Posterior vena cava (tissue), 2 donors: ENCODE measurements at regions of chr1 and their contacts with region 1.

Region 1: GRCh38 chr1:12539705-12540579 is 78.1 kb downstream of the DHRS3 start:
- DNase-seq: peak; percentile 97

Region 2: DNA sequence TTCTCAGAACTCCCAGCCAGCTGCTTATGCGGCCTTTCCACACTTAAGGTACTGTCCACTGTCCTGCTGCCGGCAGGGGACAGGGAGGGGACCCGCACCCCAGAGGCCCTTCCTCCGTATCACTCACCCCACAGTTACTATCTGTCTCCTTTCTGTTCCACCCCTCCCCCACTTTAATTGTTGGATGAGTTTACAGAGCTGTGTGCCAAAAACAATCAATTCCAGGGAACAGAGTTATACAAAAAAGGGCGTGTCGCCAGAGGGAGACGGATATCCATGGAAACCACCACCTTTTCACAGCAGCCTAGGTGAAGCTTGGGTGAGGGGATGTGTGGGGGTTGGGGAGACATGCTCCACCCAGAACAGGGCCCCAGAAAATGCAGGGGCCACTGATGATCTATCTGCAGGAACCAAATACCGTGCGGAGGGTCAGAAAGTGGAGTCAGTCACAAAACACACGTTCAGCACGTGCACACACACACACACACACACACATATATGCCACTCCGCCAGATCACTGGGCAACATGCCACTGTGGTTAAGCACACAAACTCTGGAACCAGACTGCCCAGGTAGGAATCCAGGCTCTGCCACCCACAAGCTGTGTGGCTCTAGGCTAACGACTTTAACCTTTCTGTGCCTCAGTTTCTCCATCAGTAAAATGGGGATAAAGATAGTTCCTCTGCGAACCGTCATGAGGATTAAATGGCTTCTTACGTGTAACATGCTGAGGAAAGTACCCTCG is 1774.0 kb before region 1 on chr1:
- intact Hi-C with region 1: no loop called
- DNase-seq: no peak

Region 3: DNA sequence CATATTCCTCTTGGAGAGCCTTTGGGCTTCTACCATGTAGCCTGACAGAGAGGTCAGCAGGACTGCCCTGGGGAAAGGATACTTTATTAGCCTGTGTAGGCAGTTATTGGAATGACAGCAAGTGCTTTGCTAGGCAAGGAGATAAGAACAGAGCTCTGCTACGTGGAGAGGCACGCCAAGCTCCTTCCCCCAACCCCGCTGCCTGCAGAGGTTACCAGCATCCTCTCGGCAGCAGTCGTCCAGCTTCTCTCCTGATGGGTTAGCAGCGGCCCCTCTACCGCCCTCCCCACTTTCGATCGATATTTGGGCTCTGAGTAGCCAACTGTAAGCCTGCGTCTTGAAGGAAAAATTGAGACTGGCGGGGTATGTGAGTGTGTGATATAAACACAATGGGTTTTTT is 44.2 kb before region 1 on chr1:
- intact Hi-C with region 1: loop called in 1 of 2 experiments (anchors 2 kb)
- DNase-seq: no peak

Region 4: DNA sequence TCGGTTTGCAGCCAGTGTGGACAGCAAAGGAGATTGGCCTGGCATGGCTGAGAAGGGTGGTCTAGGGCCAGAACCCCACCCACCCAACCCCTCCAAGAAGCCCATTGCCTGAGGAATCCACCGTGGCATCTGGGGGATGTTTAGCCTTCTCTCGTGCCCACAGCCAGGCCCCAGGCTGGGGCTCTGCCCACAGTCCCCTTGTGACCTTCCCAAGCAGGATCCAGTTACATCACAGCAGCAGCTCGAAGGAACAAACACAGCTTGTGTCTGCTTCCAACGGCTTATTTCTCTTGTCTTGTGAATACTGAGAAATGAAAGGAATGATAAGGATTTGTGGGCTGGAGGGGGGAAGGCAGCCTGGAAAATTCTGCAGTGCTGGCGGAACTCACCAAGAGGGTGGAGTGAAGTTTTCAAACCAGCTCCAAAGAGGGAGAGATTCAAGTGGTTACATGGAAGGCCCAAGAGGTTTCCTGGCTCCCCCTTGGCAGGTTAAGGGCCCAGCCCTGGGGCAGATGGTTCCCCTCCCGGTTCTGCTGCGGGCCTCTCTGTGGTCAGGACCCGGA is 16.5 kb after region 1 on chr1:
- intact Hi-C with region 1: no loop called
- DNase-seq: peak; percentile 88

Region 5: DNA sequence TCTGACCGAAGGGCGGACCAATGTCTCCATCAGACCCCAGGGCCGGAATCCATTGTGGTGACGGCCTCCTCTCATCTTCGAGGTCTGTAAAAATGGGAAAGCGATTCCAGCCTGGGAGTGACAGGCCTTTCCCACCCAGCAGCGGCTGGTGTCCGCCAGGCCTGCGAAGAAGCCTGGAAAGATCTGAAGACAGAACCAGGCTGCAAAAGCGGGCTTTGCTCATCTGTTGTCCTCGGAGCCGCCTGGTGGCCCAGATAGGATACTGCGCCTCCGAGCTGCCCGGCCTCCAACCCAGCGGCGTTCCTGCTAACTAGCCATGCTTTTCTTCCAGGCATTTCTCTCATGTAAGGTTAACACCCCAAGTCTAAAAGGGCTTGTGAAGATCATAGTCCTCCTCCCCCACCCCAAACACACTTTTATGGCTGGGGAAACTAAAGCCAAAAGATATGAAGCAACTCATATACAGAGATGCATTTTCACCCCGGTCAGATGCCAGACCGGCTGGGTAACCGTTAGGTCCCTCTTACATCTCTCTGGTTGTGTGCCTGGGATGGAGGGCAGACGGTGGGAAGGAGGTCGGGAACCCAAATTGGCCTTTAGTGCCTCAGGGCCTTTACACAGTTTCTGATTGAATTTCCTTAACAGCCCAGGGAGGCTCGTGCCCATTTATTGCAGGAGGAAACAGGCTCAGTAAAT is 80.0 kb after region 1 on chr1:
- intact Hi-C with region 1: loop called in 1 of 2 experiments (anchors 5 kb)
- DNase-seq: peak; percentile 96